Endothelial cell of umbilical vein (primary cell): ENCODE measurements at regions of chr10 and their contacts with region 1.

Region 1: GRCh38 chr10:25113191-25114035 is 61.4 kb upstream of the GPR158 start:
- DNase-seq: peak; percentile 64
- H3K4me3 ChIP-seq: no peak overlapping the region
- H3K27ac ChIP-seq: no peak overlapping the region
- H3K4me1 ChIP-seq: no peaks in the 10 kb centered on the region
- H3K27me3 ChIP-seq: peaks cover 0 to 4% of the 10 kb centered on the region in 2 experiments
- CTCF ChIP-seq: peak; percentile 82 to 86
- POLR2A ChIP-seq: no peak

Region 2: DNA sequence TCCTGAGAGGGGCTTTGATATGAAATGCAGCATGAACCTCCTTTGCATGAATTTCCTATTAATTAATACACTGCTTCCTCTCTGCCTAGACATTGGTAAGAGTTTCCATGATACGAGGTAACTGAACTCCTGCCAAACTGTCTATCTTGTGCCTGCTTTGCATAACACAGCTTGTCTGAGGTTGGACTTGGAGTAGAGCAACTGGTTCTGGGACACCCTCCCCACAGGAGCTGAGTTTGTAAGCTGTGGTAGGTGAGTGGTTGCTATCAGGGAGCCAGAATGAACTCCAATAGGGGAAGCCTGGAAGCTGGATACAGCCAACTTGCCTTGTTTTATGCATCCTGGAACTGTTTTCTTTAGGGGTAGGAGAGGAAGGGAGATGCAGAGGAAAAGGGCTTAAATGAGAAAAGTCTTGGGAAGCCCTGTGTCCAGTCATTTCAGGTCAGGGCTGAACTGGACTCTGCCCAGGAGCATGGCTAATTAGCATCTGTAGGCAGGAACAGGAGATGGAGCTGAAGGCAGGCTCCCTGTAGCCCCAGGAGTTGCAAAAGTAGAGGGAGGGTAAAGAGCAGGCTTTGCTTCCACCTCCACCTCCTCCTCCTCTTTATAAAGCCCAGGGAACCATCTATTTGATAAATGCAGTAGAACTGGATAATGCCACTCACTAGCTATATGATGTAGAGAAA is 11.8 kb before region 1 on chr10:
- CTCF ChIA-PET with region 1: interaction called, 11 read pairs
- POLR2A ChIA-PET with region 1: no interaction called
- dilution Hi-C with region 1: no loop called
- intact Hi-C with region 1: no loop called
- DNase-seq: no peak
- H3K4me3 ChIP-seq: no peak overlapping the region
- H3K27ac ChIP-seq: no peak overlapping the region
- H3K4me1 ChIP-seq: no peaks in the 10 kb centered on the region
- H3K27me3 ChIP-seq: no peaks in the 10 kb centered on the region
- CTCF ChIP-seq: no peak
- POLR2A ChIP-seq: no peak

Region 3: DNA sequence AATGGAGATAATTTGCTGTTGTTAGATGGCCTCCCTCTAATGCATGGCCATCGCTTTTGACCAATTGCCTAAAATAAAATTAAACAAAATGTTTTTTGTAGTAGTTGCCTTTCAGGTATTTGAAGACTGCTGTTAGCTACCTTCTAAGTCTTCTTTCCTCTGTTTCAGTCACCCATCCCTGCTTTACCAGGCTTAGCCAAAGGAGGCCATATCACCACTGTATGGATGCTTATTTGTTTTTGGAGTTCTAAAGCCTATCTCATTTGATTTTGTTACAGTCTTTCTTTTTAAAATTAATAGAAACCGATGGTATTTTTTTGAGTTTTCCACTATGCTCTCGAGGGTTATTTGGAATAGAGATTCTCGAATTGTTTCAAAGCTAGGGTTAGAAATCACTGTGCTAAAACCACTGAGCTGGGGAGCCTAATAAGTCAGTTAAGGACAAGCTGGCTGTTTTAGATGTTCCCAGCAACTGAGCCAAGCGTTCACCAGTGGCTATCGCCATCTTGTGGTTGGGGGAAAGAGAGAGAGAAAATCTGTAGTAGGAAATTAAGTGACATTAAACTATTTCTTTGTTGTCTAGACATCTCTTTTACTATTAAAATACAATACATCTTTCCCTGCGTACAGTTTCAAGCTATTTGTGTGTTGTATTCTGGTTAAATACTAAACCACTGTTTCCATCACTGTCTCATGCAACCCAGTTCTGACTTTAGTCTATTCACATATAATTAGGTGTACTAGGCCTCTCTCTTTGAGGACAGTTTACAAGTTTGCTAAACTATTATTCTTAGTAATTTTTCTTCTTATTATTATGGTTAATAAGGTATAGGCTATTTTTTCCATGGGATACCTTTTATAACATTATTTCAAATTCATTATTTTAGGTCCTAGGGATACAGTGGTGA is 113.6 kb after region 1 on chr10:
- CTCF ChIA-PET with region 1: interaction called, 42 read pairs
- POLR2A ChIA-PET with region 1: no interaction called
- dilution Hi-C with region 1: no loop called
- intact Hi-C with region 1: loop called (anchors 1 kb)
- DNase-seq: peak; percentile 42
- H3K4me3 ChIP-seq: no peak overlapping the region
- H3K27ac ChIP-seq: no peak overlapping the region
- H3K4me1 ChIP-seq: no peaks in the 10 kb centered on the region
- H3K27me3 ChIP-seq: no peaks in the 10 kb centered on the region
- CTCF ChIP-seq: peak; percentile 56
- POLR2A ChIP-seq: no peak

Region 4: DNA sequence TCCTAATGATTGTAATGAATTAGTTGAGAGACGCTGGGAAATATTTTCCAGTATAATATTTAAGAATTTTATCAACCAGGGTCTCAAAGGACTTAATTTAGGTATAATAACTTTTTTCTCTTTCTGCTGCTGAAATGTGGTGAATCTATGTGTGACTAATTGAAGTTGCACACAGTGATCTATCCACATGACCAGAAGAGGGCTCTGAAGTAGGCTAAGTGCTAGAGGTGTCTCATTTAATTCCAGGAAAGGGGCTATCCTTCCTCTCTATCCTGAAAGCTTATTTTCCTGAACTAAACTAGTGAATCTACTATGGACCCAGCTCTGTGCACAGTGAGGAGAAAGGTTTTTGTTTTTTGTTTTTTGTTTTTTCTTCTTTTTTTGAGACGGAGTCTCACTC is 526.2 kb after region 1 on chr10:
- CTCF ChIA-PET with region 1: interaction called, 12 read pairs
- POLR2A ChIA-PET with region 1: no interaction called
- dilution Hi-C with region 1: no loop called
- intact Hi-C with region 1: loop called (anchors 2 kb)
- DNase-seq: no peak
- H3K4me3 ChIP-seq: no peak overlapping the region
- H3K27ac ChIP-seq: no peak overlapping the region
- H3K4me1 ChIP-seq: no peaks in the 10 kb centered on the region
- H3K27me3 ChIP-seq: no peaks in the 10 kb centered on the region
- CTCF ChIP-seq: no peak
- POLR2A ChIP-seq: no peak